Ascending aorta (tissue), 2 donors: ENCODE measurements at regions of chr10 and their contacts with region 1.

Region 1: DNA sequence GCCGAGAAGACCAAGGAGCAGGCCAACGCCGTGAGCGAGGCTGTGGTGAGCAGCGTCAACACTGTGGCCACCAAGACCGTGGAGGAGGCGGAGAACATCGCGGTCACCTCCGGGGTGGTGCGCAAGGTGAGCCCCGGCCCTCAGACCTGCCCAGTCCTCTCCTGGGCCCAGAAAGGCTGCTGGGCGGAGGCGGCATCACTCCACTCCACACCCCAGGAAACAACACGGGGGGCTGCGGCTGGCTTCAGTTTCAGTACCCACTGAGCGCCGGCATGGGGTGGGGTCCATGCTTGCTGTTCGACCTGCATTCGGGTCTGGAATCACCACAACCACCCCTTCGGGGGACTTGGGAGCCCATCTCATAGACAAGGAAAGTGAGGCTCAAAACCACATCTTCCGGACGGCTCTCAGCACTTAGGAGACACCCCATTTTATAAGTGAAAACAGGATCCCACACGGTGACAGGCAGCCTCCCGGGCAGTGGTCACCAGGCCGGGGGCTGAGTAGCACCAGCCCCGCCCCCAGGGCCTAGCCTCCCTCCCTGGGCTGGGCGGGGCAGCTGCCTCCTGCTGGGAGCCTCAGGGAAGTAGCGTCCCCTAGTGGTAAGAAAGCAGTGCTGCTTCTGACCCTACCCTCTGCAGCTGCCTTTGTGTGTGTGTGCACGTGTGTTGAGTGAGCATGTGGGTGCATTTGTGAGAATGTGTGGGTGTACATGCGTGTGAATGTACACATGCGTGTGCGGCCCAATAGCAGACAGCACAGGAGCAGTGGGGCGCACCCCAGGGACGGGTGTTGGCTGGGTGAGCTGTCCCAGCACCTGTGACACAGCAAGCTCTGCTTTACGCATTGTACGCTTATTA is 1.8 kb downstream of the SNCG start:
- DNase-seq: peak in 1 of 2 donors; percentile 83
- H3K4me3 ChIP-seq: peak overlapping the region in 1 of 2 donors; percentile 42
- H3K27ac ChIP-seq: peak overlapping the region; percentile 95 to 98
- H3K4me1 ChIP-seq: peaks cover 40 to 59% of the 10 kb centered on the region in 2 donors
- H3K27me3 ChIP-seq: no peaks in the 10 kb centered on the region
- CTCF ChIP-seq: peak; percentile 91 to 97 (median 97)

Region 2: GRCh38 chr10:86693721-86694369 is 266.4 kb before region 1 on chr10:
- intact Hi-C with region 1: loop called (anchors 5 kb)
- DNase-seq: no peak
- H3K4me3 ChIP-seq: no peak overlapping the region
- H3K27ac ChIP-seq: peak overlapping the region in 1 of 2 donors; percentile 36
- H3K4me1 ChIP-seq: peaks cover 7 to 15% of the 10 kb centered on the region in 2 donors
- H3K27me3 ChIP-seq: no peaks in the 10 kb centered on the region
- CTCF ChIP-seq: peak; percentile 35 to 54 (median 51)

Region 3: DNA sequence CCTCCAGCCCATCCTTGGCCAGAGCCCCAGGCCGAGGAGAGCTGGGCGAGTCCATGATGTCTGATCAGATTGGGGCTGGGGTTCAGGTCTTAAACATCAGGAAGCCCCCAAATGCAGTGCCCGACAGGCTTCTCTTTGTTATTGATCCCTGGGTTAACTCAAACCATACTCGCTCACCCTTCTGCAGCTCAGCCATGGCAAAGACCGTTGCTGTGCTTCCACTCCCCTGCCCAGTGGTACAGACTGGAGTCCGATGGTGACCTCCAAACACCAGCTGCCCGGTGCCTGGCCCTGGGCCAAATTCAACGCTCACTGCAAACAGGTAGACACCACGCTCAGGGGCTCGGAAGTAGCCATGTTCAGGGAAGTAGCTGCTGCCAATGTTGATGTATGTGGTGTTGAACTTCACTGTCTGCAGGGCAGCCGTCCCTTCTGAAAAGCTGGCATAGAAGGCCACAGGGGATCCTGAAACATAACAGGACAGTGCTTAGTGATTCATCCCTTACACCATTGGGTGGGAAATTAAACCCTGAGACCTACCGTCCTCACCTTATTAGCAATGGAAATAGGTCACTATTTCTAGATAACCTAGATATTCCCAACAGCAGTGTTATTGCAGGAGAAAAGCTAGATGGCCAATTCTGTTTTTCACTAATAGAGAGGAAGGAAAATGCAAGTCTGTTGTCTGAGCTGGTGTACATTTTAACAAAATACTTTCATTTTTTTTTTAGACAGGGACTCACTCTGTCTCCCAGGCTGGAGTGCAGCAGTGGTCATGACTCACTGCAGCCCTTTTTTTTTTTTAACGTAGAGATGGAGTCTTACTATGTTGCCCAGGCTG is 23.4 kb before region 1 on chr10:
- intact Hi-C with region 1: loop called (anchors 1 kb)
- DNase-seq: peak in 1 of 2 donors; percentile 66
- H3K4me3 ChIP-seq: no peak overlapping the region
- H3K27ac ChIP-seq: peak overlapping the region; percentile 49 to 50
- H3K4me1 ChIP-seq: peaks cover 0 to 10% of the 10 kb centered on the region in 2 donors
- H3K27me3 ChIP-seq: no peaks in the 10 kb centered on the region
- CTCF ChIP-seq: no peak

Region 4: GRCh38 chr10:86971232-86971991 is 11.2 kb after region 1 on chr10:
- intact Hi-C with region 1: no loop called
- DNase-seq: peak; percentile 74 to 96
- H3K4me3 ChIP-seq: peak overlapping the region; percentile 68 to 79
- H3K27ac ChIP-seq: peak overlapping the region; percentile 99 to 100
- H3K4me1 ChIP-seq: peaks cover 16 to 29% of the 10 kb centered on the region in 2 donors
- H3K27me3 ChIP-seq: no peaks in the 10 kb centered on the region
- CTCF ChIP-seq: peak in 2 of 3 experiments; percentile 12 to 39